Dorsolateral prefrontal cortex (tissue), 120 donors: ENCODE measurements at regions of chr12 and their contacts with region 1.

Region 1: DNA sequence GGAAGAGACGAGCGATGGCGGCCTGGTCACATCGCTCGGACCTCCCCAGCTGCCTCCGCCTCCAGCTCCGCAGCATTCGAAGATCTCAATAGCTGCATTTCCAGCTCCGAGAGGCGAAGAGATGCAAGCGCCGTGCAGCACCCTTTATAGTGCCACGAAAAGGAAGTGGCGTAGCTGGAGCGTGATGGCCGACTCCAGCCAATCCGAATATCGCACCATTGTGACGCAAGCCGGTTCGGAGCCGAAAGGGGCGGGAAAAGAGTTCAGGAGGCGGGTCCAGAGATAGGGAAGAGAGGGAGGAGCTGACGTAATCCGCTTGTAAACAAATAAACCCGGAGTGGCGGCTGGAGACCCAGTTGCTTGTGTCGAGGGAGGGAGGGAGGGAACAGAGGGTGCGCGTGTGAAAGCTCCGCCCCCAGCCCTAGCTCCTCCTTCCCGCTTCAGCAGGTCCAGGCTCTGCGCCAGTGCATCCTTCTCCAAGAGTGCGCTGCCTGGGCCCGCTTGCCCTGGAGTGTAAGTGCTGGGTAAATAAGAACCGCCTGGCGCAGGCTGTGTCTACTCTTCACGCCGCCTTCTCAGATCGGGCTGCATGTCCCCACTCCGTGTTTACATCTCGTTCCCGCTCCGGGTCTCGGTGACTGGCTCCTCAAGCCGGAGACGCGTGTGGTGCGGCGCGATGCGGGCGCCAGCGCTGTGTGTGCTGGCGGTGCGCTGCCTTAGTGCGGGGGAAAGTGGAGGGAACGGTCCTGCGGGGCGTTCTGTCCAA is at the start of gene BTG1:
- DNase-seq: peak; percentile 97 to 100 (median 100)
- H3K4me3 ChIP-seq: peak within 1 kb of the TSS; percentile 66 to 99 (median 93)
- H3K27ac ChIP-seq: peak within 1 kb of the TSS; percentile 86 to 100 (median 98)
- H3K27me3 ChIP-seq: no peaks in the 10 kb centered on the region
- CTCF ChIP-seq: peak in 21 of 56 donors; percentile 7 to 55 (median 26)
- total RNA-seq, gene BTG1: 23.7 to 85.7 (median 42.5) TPM

Region 2: GRCh38 chr12:91382081-91382543 is 763.8 kb before region 1 on chr12:
- intact Hi-C with region 1: loop called (anchors 5 kb)
- DNase-seq: peak; percentile 77 to 93 (median 86)
- H3K4me3 ChIP-seq: peak overlapping the region; percentile 28 to 77 (median 60)
- H3K27ac ChIP-seq: peak overlapping the region; percentile 55 to 98 (median 92)
- H3K27me3 ChIP-seq: no peaks in the 10 kb centered on the region
- CTCF ChIP-seq: peak; percentile 81 to 99 (median 93)

Region 3: DNA sequence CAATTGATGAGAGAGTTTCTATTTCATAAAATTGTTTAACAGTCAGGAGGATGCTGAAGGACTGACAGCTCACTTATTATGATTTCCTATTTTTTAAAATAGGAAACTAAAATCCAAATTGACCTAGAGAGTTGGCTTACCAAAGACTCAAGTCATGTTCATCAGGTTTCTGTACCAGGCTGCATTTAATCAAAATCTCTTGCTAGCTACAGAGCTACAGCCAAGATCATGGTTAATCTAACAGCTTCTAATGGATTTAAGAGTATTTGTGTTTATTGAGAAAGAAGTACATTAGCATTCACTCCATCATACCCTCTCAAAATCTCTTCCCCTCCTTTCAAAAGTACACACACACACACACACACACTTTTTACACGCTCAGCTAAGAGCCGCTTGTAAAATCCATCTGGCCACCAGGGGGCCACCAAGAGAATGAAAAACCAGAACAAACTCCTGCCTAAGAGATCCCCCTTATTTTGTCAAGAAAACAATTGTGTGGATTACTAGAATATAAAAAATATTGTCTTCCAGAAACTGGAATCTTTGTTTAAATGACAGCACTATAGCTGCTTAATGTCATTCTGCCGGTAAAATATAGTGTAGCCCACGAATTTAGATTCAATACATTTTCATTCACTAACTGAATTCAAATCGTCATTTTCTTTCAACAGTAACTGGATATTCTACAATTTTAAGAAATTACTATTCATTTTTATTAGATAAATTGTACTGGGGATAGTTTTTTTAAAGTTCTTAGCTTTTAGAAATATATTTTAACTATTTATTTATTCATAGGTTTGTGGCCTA is 334.2 kb before region 1 on chr12:
- intact Hi-C with region 1: loop called (anchors 5 to 10 kb)
- DNase-seq: peak; percentile 53 to 83 (median 66)
- H3K4me3 ChIP-seq: no peak overlapping the region
- H3K27ac ChIP-seq: peak overlapping the region in 1 of 59 donors; percentile 9
- H3K27me3 ChIP-seq: no peaks in the 10 kb centered on the region
- CTCF ChIP-seq: peak; percentile 71 to 91 (median 84)

Region 4: GRCh38 chr12:92289629-92290349 is 143.9 kb after region 1 on chr12:
- intact Hi-C with region 1: loop called in 1 of 2 experiments (anchors 5 kb)
- DNase-seq: no peak
- H3K4me3 ChIP-seq: no peak overlapping the region
- H3K27ac ChIP-seq: peak overlapping the region in 10 of 59 donors; percentile 13 to 61 (median 28)
- H3K27me3 ChIP-seq: no peaks in the 10 kb centered on the region
- CTCF ChIP-seq: no peak

Region 5: GRCh38 chr12:93467351-93468007 is 1321.6 kb after region 1 on chr12 and contains the start of gene MRPL42:
- intact Hi-C with region 1: loop called in 1 of 2 experiments (anchors 10 kb)
- DNase-seq: peak; percentile 81 to 94 (median 86)
- H3K4me3 ChIP-seq: peak within 1 kb of the TSS; percentile 65 to 96 (median 87)
- H3K27ac ChIP-seq: peak within 1 kb of the TSS; percentile 45 to 96 (median 87)
- H3K27me3 ChIP-seq: no peaks in the 10 kb centered on the region
- CTCF ChIP-seq: peak; percentile 44 to 94 (median 77)
- total RNA-seq, gene MRPL42: 26.4 to 78.8 (median 56.2) TPM